ENCODE measurements at regions of chr5 and their contacts with region 1.

Region 1: GRCh38 chr5:141641634-141642267 is 5.0 kb downstream of the RELL2 start:
- DNase-seq: no peak
- H3K4me3 Mint-ChIP-seq: no peak overlapping the region
- H3K27ac Mint-ChIP-seq: no peak overlapping the region
- H3K4me1 Mint-ChIP-seq: peaks cover 28% of the 10 kb centered on the region
- H3K27me3 Mint-ChIP-seq: no peaks in the 10 kb centered on the region

Region 2: DNA sequence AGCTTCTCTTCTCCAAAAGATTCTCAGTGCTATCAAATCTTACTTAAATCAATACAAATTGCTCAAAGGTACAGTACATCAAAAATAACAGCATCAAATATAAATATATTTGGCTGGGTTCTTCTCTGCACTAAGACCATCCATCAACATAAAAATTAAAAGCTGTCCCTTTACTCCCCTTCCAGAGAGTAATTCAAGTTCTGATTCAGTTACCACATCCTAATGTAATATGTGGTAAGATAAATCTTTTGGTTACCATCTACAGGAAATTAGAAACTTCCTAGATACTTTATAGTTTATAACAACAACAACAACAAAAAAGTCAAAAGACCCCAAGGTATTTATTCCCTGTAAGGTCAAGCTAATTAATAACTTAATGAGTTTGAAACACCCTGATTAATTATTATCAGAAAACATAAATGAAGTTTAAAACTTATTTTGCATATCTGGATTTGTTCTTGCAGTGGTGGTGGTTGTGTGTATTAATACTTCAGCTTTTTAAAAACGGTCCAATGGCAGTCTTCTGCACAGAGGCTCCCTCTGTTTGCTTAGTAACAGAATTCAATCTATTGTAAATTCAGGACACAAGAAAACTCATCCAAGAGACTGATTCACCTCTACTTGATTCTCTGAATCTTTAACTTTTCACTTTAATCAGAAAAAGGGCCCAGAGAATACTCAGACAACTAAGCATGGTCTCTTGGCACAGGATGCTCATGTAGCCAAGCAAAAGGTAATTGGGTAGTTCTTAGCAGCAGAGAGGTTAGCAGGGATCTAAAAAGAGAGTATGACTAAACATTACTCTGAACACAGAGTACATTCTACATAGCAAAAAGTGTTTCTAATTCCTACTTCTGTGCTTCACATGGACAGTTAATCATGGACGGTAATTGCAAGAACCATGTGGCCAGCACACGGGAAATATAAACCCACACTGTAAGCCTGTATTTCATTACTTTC is 43.1 kb before region 1 on chr5:
- CTCF ChIA-PET with region 1: interaction called, 14 read pairs
- POLR2A ChIA-PET with region 1: no interaction called
- DNase-seq: no peak
- H3K4me3 Mint-ChIP-seq: no peak overlapping the region
- H3K27ac Mint-ChIP-seq: peak overlapping the region; percentile 44
- H3K4me1 Mint-ChIP-seq: peaks cover 77% of the 10 kb centered on the region
- H3K27me3 Mint-ChIP-seq: no peaks in the 10 kb centered on the region